GM13976 (cell line): ENCODE measurements at regions of chr7 and their contacts with region 1.

Region 1: GRCh38 chr7:33744293-33745075 is 160.9 kb upstream of the BMPER start:
- DNase-seq: peak; percentile 45
- CTCF ChIP-seq: no peak

Region 2: GRCh38 chr7:32891800-32892520 is 852.5 kb before region 1 on chr7:
- in situ Hi-C with region 1: no loop called
- DNase-seq: peak; percentile 92
- CTCF ChIP-seq: no peak

Region 3: GRCh38 chr7:33418251-33418701 is 326.2 kb before region 1 on chr7:
- in situ Hi-C with region 1: no loop called
- DNase-seq: no peak
- CTCF ChIP-seq: no peak

Region 4: DNA sequence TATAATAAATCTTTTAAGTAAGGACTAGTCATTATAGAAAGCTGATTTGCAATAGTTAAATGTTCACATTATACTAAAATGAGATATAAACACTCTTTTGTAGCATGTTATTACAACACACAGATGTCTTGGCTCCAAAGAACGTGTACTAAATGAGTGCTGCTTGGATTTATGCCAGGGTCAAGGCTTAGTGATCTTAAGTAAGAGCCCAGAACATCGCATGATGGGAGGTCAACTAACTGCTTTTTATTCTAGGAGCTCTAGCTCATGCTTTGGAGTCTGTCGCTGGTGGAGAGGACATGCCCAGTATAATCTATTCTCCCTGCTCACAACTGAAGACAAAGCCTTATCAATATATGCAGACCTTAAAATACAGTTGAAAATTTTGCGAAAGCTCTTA is 300.0 kb before region 1 on chr7:
- in situ Hi-C with region 1: loop called (anchors 25 kb)
- DNase-seq: no peak
- CTCF ChIP-seq: no peak